H1 (cell line): ENCODE measurements at regions of chrX and their contacts with region 1.

Region 1: GRCh38 chrX:151505796-151506195 is 57.7 kb upstream of the PASD1 start:
- DNase-seq: peak in 1 of 2 experiments; percentile 44
- H3K4me3 ChIP-seq: no peak overlapping the region
- H3K27ac ChIP-seq: no peak overlapping the region
- H3K4me1 ChIP-seq: no peaks in the 10 kb centered on the region
- H3K27me3 ChIP-seq: no peaks in the 10 kb centered on the region
- CTCF ChIP-seq: peak; percentile 27 to 66 (median 55)
- EP300 ChIP-seq: no peak
- POLR2A ChIP-seq: no peak
- RAD21 ChIP-seq: peak; percentile 76 to 85

Region 2: DNA sequence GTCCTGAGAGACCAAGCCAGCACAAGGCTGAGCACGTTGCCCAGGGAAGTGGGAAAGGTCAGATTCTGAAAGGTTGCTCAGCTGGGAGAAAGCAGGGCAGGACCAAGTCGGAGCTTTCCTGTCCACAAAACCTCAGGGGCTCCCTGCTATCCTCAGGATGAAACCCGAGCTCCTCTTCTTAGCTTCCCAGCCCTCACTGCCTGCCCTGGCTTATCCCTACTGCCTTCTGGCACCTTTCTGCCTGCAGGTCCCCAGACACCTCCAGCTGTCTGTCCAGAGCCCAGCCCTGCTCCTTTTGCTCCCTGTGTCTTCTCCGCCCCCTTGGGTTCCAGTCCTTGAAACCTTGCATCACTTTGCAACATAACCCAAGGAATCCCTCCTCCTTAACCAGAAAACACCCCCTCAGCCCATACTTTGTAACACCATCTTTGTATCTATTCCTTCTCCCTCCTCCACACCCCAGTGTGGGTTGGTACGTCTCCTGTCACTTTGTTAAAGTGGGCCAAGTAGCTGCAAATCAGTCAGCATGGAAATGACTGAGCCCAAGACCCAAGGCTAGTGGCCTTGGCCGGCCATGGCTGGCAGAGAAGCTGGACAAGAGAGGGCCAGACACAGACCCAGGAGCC is 169.4 kb after region 1 on chrX:
- CTCF ChIA-PET with region 1: interaction called, 29 read pairs
- POLR2A ChIA-PET with region 1: no interaction called
- DNase-seq: no peak
- H3K4me3 ChIP-seq: no peak overlapping the region
- H3K27ac ChIP-seq: no peak overlapping the region
- H3K4me1 ChIP-seq: no peaks in the 10 kb centered on the region
- H3K27me3 ChIP-seq: no peaks in the 10 kb centered on the region
- CTCF ChIP-seq: no peak
- EP300 ChIP-seq: no peak
- POLR2A ChIP-seq: no peak
- RAD21 ChIP-seq: no peak

Region 3: DNA sequence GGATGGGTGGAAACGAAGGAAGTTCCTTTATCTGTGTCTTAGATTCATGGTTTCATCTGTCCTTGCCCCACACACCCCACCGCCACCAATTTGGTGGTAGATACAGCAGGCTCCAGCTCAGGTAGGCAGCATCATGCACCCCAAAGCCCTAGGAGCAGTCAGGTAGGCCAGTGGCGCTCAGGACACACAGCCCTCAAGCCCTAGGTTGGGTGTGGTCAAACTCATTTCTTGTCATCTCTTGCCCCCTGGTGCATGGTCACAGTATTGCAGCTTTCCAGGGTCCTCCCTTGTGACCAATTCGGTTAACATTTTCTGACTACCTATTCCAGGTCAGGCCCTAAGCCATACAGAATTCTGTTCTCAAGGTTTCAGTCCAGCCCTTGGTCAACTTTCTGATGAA is 175.0 kb after region 1 on chrX:
- CTCF ChIA-PET with region 1: interaction called, 29 read pairs
- POLR2A ChIA-PET with region 1: no interaction called
- DNase-seq: peak; percentile 21 to 86
- H3K4me3 ChIP-seq: no peak overlapping the region
- H3K27ac ChIP-seq: no peak overlapping the region
- H3K4me1 ChIP-seq: no peaks in the 10 kb centered on the region
- H3K27me3 ChIP-seq: no peaks in the 10 kb centered on the region
- CTCF ChIP-seq: peak; percentile 51 to 75 (median 74)
- EP300 ChIP-seq: no peak
- POLR2A ChIP-seq: no peak
- RAD21 ChIP-seq: peak; percentile 91 to 95